ENCODE measurements at regions of chrX and their contacts with region 1.

Region 1: GRCh38 chrX:109952984-109953905 is 49.7 kb upstream of the TMEM164 start:
- DNase-seq: no peak
- ATAC-seq: no peak
- H3K4me3 ChIP-seq: no peak overlapping the region
- H3K27ac ChIP-seq: no peak overlapping the region
- H3K4me1 ChIP-seq: peaks cover 32% of the 10 kb centered on the region
- H3K27me3 ChIP-seq: no peaks in the 10 kb centered on the region
- CTCF ChIP-seq: no peak

Region 2: GRCh38 chrX:110086916-110087484 is 133.8 kb after region 1 on chrX:
- CTCF ChIA-PET with region 1: no interaction called
- POLR2A ChIA-PET with region 1: no interaction called
- intact Hi-C with region 1: loop called (anchors 5 kb)
- DNase-seq: peak; percentile 90
- ATAC-seq: peak; percentile 70
- H3K4me3 ChIP-seq: peak overlapping the region; percentile 59; the same call in 1 of the 2 replicates
- H3K27ac ChIP-seq: peak overlapping the region; percentile 100
- H3K4me1 ChIP-seq: peaks cover 45% of the 10 kb centered on the region
- H3K27me3 ChIP-seq: no peaks in the 10 kb centered on the region
- CTCF ChIP-seq: no peak

Region 3: DNA sequence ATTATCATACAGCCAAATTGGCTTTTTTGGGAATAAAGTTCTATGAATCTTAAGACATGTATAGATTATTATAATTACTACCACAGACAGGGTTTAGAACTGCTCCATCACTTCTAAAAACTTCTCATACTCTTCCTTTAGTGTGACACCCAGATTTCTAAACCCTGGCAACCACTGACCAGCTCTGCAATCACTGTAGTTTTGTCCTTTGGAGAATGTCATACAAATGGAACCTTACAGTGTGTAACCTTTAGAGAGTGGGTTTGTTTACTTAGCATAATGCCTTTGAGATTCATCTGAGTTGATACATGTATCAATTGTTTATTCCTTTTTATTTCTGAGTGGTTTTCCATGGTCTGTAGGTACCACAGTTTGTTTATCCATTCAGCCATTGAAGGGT is 144.7 kb after region 1 on chrX:
- CTCF ChIA-PET with region 1: no interaction called
- POLR2A ChIA-PET with region 1: no interaction called
- intact Hi-C with region 1: no loop called
- DNase-seq: no peak
- ATAC-seq: no peak
- H3K4me3 ChIP-seq: no peak overlapping the region
- H3K27ac ChIP-seq: no peak overlapping the region
- H3K4me1 ChIP-seq: no peaks in the 10 kb centered on the region
- H3K27me3 ChIP-seq: no peaks in the 10 kb centered on the region
- CTCF ChIP-seq: no peak

Measured in PC-3 (cell line).